SK-N-SH (cell line): ENCODE measurements at regions of chr2 and their contacts with region 1.

Region 1: GRCh38 chr2:237572021-237572741 is 5.8 kb downstream of the PRLH start:
- DNase-seq: peak; percentile 96
- H3K4me3 ChIP-seq: peak overlapping the region in 1 of 2 experiments; percentile 17; a peak in 1 of 4 replicates
- H3K27ac ChIP-seq: peak overlapping the region in 1 of 2 experiments; percentile 21; a peak in 2 of 4 replicates
- H3K4me1 ChIP-seq: peaks cover 6 to 16% of the 10 kb centered on the region in 2 experiments; a peak in 3 of 4 replicates
- H3K27me3 ChIP-seq: no peaks in the 10 kb centered on the region
- CTCF ChIP-seq: peak; percentile 98
- EP300 ChIP-seq: no peak
- RAD21 ChIP-seq: peak; percentile 98

Region 2: DNA sequence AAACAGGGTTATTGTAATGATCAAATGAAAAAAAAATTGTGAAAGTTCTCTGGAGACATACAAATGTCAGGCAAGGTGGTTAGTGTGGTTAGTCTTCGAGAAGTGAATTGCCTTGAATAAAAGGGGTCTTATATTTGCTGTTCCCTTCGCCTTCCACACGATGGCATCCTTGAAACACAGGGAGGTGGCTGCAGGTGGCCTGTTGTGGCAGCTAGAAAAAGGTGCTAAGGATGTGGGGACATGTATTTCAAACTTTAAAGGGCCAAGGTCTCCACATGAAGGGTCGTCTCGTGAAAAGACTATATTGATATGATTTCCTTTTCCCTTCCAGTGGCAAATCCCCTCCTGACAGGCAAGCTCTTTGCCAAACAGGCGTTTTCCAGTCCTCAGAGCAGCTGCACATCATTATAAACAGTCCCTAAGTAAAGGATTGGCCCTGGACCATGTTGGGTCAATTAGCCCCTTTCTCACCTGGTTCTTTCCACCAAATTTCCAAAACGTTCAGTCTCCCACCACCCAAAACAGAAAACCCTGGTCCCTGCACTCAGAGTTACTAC is 418.0 kb before region 1 on chr2:
- CTCF ChIA-PET with region 1: interaction called, 25 read pairs
- POLR2A ChIA-PET with region 1: no interaction called
- DNase-seq: peak; percentile 70
- H3K4me3 ChIP-seq: no peak overlapping the region
- H3K27ac ChIP-seq: no peak overlapping the region
- H3K4me1 ChIP-seq: peaks cover 19 to 22% of the 10 kb centered on the region in 2 experiments; a peak in 3 of 4 replicates
- H3K27me3 ChIP-seq: no peaks in the 10 kb centered on the region
- CTCF ChIP-seq: peak; percentile 66
- EP300 ChIP-seq: no peak
- RAD21 ChIP-seq: peak; percentile 97

Region 3: DNA sequence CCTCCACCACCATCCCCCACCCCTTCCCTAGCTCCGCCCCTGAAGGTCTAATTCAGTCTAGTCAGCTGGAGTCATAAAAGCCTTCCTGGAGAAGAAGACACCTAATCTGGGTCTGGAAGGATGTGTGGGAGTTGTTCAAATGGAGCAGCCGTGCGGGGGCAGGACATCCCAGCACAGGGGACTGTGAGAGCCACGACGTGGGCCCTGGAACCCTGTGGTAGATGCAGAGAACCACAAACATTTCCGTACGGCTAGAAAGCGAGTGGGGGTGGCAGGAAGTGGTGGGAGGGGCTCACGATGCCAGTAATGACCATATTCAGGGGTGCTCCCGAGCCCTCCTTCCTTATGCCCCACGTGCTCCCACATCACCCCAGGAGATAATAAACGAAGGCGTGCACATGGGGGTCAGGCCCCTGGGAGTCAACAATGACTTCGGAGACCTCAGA is 137.3 kb before region 1 on chr2:
- CTCF ChIA-PET with region 1: interaction called, 12 read pairs
- POLR2A ChIA-PET with region 1: no interaction called
- DNase-seq: no peak
- H3K4me3 ChIP-seq: no peak overlapping the region
- H3K27ac ChIP-seq: peak overlapping the region; percentile 12 to 99; a peak in 3 of 4 replicates
- H3K4me1 ChIP-seq: peaks cover 34 to 45% of the 10 kb centered on the region in 2 experiments
- H3K27me3 ChIP-seq: no peaks in the 10 kb centered on the region
- CTCF ChIP-seq: no peak
- EP300 ChIP-seq: no peak
- RAD21 ChIP-seq: no peak

Region 4: DNA sequence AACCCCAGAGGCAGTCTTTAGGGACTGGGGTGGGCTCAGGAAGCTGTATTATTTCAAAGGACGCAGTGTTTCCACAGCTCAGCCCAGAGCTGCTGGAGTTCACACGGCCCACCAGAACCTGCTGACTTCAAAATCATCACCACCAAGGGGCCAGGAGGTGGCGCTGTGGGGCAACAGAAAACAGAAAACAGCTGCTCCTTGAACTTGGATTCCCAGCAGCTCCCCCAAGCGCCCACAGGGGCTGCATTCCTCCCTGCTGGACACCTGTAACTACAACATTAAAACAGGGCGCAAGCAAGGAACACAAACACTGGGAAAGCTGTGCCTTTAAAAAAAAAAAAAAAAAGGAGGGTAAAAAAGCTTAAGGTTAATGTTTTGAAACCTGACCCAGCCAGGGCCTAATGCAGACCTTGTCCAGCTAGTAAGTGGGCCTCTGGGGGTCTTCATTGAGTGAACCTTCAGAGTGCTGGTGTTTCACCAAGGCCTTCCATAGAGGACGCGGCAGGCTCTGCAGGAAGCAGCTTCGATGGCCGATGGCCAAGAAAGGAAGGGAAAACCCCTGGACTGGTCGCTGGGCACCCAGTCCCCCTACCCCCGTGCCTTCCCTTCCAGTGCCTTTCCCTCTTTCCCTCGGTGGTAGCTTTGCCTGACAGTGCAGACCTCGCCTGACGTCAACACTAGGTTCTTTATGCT is 59.3 kb before region 1 on chr2:
- CTCF ChIA-PET with region 1: interaction called, 311 read pairs
- POLR2A ChIA-PET with region 1: no interaction called
- DNase-seq: peak; percentile 91
- H3K4me3 ChIP-seq: peak overlapping the region in 1 of 2 experiments; percentile 33; a peak in 1 of 4 replicates
- H3K27ac ChIP-seq: peak overlapping the region in 1 of 2 experiments; percentile 100; a peak in 2 of 4 replicates
- H3K4me1 ChIP-seq: peaks cover 2 to 12% of the 10 kb centered on the region in 2 experiments; a peak in 2 of 4 replicates
- H3K27me3 ChIP-seq: no peaks in the 10 kb centered on the region
- CTCF ChIP-seq: peak; percentile 96
- EP300 ChIP-seq: no peak
- RAD21 ChIP-seq: peak; percentile 93

Region 5: DNA sequence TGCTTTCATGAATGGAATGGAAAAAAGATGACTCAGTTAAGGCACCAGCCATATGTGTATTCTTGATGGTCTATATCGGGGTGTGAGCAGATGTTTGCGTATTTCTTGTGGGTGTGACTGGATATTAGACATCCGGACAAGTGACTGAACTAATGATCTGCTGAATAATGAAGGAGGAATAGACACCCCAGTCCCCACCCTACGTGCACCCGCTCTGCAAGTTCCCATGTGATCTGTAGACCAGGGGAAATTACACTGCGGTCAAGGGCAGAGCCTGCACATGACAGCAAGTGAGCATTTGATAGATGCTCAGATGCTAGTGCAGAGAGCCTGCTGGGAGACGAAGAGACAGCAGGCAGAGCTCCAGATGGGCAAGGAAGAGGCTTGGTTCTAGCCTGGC is 18.2 kb before region 1 on chr2:
- CTCF ChIA-PET with region 1: interaction called, 59 read pairs
- POLR2A ChIA-PET with region 1: no interaction called
- DNase-seq: no peak
- H3K4me3 ChIP-seq: no peak overlapping the region
- H3K27ac ChIP-seq: no peak overlapping the region
- H3K4me1 ChIP-seq: peaks cover 0 to 3% of the 10 kb centered on the region in 2 experiments; a peak in 1 of 4 replicates
- H3K27me3 ChIP-seq: no peaks in the 10 kb centered on the region
- CTCF ChIP-seq: no peak
- EP300 ChIP-seq: no peak
- RAD21 ChIP-seq: no peak

Region 6: GRCh38 chr2:237731663-237732062 is 159.5 kb after region 1 on chr2:
- CTCF ChIA-PET with region 1: interaction called, 10 read pairs
- POLR2A ChIA-PET with region 1: no interaction called
- DNase-seq: peak; percentile 64
- H3K4me3 ChIP-seq: no peak overlapping the region
- H3K27ac ChIP-seq: peak overlapping the region; percentile 6 to 58
- H3K4me1 ChIP-seq: peaks cover 35 to 46% of the 10 kb centered on the region in 2 experiments; a peak in 3 of 4 replicates
- H3K27me3 ChIP-seq: no peaks in the 10 kb centered on the region
- CTCF ChIP-seq: no peak
- EP300 ChIP-seq: no peak; a peak in 1 of 4 replicates
- RAD21 ChIP-seq: no peak